ENCODE measurements at regions of chr4 and their contacts with region 1.

Region 1: DNA sequence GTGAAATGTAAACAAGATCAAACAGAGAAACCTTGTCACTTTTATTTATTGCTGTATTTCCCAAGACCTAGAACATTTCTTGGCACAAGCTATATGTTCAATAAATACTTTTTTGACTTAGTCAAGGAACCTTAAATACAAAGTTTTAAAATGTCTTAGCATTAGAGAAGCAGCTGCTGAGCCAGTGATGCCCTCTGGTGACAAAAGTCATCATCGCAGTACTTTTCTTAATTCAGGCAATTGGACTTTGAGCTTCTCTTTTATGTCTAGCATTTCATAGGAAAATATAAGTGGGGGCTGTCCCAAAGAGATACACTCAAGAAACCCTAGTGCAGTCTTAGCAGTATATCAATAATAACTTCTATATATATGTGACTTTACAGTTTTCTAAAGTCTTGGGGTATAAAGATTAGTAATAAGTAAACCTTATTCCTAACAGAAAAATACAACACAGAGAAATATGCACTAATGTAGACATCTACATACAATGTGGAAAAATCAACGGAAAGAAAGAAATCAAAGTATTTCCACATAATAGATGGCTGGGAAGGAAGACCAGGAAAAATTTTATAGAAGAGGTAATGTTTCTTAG is 118.4 kb downstream of the DTHD1 start:
- DNase-seq: peak; percentile 44 to 60 (median 52)
- H3K4me3 ChIP-seq: no peak overlapping the region
- H3K4me3 Mint-ChIP-seq: no peak overlapping the region
- H3K27ac ChIP-seq: no peak overlapping the region
- H3K27ac Mint-ChIP-seq: no peak overlapping the region
- H3K4me1 ChIP-seq: peaks cover 5% of the 10 kb centered on the region
- H3K4me1 Mint-ChIP-seq: peaks cover 4 to 8% (median 5%) of the 10 kb centered on the region in 4 donors
- H3K27me3 ChIP-seq: no peaks in the 10 kb centered on the region
- H3K27me3 Mint-ChIP-seq: no peaks in the 10 kb centered on the region

Region 2: GRCh38 chr4:36208893-36209473 is 190.9 kb before region 1 on chr4:
- CTCF ChIA-PET with region 1: interaction called, 10 read pairs
- POLR2A ChIA-PET with region 1: interaction called, 3 read pairs
- intact Hi-C with region 1: no loop called
- DNase-seq: peak; percentile 33 to 48 (median 43)
- H3K4me3 ChIP-seq: no peak overlapping the region
- H3K4me3 Mint-ChIP-seq: peak overlapping the region in 7 of 8 donors; percentile 25 to 85 (median 64)
- H3K27ac ChIP-seq: no peak overlapping the region
- H3K27ac Mint-ChIP-seq: peak overlapping the region; percentile 4 to 91 (median 66)
- H3K4me1 ChIP-seq: peaks cover 40% of the 10 kb centered on the region
- H3K4me1 Mint-ChIP-seq: peaks cover 37 to 78% (median 54%) of the 10 kb centered on the region in 4 donors
- H3K27me3 ChIP-seq: no peaks in the 10 kb centered on the region
- H3K27me3 Mint-ChIP-seq: no peaks in the 10 kb centered on the region

Region 3: GRCh38 chr4:36325499-36325898 is 74.4 kb before region 1 on chr4:
- CTCF ChIA-PET with region 1: interaction called, 23 read pairs
- POLR2A ChIA-PET with region 1: no interaction called
- intact Hi-C with region 1: no loop called
- DNase-seq: peak; percentile 13 to 48 (median 25)
- H3K4me3 ChIP-seq: no peak overlapping the region
- H3K4me3 Mint-ChIP-seq: peak overlapping the region in 6 of 8 donors; percentile 4 to 63 (median 46)
- H3K27ac ChIP-seq: peak overlapping the region; percentile 22
- H3K27ac Mint-ChIP-seq: peak overlapping the region; percentile 47 to 87 (median 81)
- H3K4me1 ChIP-seq: peaks cover 41% of the 10 kb centered on the region
- H3K4me1 Mint-ChIP-seq: peaks cover 38 to 63% (median 46%) of the 10 kb centered on the region in 4 donors
- H3K27me3 ChIP-seq: no peaks in the 10 kb centered on the region
- H3K27me3 Mint-ChIP-seq: no peaks in the 10 kb centered on the region

Region 4: DNA sequence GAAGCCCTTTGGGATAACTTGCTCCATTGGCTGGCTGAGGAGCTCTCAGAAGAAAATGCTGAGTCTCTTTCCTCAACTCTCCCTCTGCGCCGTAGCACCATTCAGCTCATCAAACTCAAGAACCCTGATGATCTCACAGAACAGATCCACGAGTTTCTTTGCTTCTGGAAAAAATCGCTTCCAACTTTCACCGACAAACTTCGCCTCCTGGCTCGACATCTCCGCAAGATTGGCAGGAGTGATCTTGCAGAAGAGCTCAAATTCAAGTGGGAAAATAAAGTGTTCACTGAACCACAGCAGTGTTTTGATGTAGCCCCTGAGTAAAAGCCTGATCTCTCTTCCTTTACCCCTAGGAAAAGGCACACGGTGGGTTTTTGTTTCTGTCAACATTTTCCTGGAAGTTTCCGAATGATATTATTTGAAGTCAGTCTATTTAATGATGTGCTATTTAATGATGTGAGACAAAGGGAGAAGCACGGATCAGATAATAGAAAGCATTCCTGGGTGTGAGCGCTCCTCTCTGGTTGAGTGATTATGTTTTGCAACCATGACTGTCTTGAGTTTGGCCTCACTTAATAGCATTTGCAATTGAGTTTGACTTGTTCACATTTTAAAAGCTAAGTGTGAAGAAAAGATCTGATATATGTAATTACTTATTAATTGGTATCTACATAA is 56.2 kb before region 1 on chr4:
- CTCF ChIA-PET with region 1: interaction called, 105 read pairs
- POLR2A ChIA-PET with region 1: no interaction called
- intact Hi-C with region 1: no loop called
- DNase-seq: no peak
- H3K4me3 ChIP-seq: no peak overlapping the region
- H3K4me3 Mint-ChIP-seq: no peak overlapping the region
- H3K27ac ChIP-seq: no peak overlapping the region
- H3K27ac Mint-ChIP-seq: no peak overlapping the region
- H3K4me1 ChIP-seq: no peaks in the 10 kb centered on the region
- H3K4me1 Mint-ChIP-seq: peaks cover 5 to 8% (median 7%) of the 10 kb centered on the region in 4 donors
- H3K27me3 ChIP-seq: no peaks in the 10 kb centered on the region
- H3K27me3 Mint-ChIP-seq: no peaks in the 10 kb centered on the region

Region 5: DNA sequence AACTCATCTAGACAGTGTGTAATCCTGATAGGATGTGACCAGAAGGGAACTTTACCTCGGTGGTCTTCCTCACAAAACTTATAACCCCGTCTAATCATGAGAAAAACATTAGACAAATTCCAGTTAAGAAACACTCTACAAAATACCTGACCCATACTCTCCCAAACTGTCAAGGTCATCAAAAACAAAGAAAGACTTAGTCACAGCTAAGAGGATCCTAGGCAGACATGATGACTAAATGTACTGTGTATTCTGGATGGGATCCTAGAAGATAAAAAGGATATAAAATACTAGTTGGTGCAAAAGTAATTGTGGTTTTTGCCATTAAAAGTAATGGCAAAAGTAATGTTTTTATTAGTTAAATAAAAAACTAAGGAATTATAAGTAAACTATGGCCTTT is 36.8 kb before region 1 on chr4:
- CTCF ChIA-PET with region 1: interaction called, 25 read pairs
- POLR2A ChIA-PET with region 1: no interaction called
- intact Hi-C with region 1: no loop called
- DNase-seq: no peak
- H3K4me3 ChIP-seq: no peak overlapping the region
- H3K4me3 Mint-ChIP-seq: no peak overlapping the region
- H3K27ac ChIP-seq: no peak overlapping the region
- H3K27ac Mint-ChIP-seq: no peak overlapping the region
- H3K4me1 ChIP-seq: no peaks in the 10 kb centered on the region
- H3K4me1 Mint-ChIP-seq: no peaks in the 10 kb centered on the region
- H3K27me3 ChIP-seq: no peaks in the 10 kb centered on the region
- H3K27me3 Mint-ChIP-seq: no peaks in the 10 kb centered on the region

Region 6: GRCh38 chr4:36414248-36414647 is 14.4 kb after region 1 on chr4:
- CTCF ChIA-PET with region 1: interaction called, 10 read pairs
- POLR2A ChIA-PET with region 1: no interaction called
- intact Hi-C with region 1: no loop called
- DNase-seq: no peak
- H3K4me3 ChIP-seq: no peak overlapping the region
- H3K4me3 Mint-ChIP-seq: no peak overlapping the region
- H3K27ac ChIP-seq: no peak overlapping the region
- H3K27ac Mint-ChIP-seq: no peak overlapping the region
- H3K4me1 ChIP-seq: no peaks in the 10 kb centered on the region
- H3K4me1 Mint-ChIP-seq: no peaks in the 10 kb centered on the region
- H3K27me3 ChIP-seq: peaks cover 14% of the 10 kb centered on the region
- H3K27me3 Mint-ChIP-seq: peaks cover 21 to 37% of the 10 kb centered on the region in 2 donors